H1 (cell line): ENCODE measurements at regions of chr6 and their contacts with region 1.

Region 1: DNA sequence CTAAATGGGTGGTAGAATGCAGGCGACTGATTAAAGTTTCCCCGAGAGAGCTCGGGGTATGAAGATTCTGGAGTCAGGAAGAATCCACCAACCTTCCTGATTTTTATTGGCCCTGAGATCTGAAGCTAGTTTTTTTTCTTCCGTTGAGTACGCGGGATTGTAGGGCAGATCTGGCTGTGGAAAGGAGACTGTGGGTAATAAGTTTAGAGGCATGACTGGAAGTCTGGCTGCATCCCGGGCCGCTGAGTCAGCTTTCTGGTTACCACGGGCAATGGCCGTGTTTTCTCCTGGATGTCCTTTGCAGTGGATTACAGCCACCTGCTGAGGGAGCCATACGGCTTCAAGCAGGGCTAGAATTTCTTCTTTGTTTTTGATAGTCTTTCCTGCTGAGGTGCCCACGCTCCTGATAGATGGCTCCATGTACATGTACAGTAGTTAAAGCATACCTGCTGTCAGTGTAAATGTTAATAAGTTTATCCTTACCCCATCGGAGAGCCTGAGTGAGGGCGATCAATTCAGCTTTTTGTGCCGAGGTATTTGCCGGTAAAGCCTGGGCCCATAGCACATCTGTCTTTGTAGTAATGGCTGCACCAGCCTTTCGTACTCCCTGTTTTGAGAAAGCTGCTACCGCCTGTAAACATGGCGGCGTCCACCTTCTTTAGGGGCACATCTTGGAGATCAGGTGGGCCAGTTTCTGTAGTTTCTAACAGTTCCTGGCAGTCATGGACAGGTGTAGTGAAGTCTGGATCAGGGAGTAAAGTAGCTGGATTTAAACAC is 154.0 kb downstream of the TRIM27 start:
- DNase-seq: no peak
- H3K4me3 ChIP-seq: peak overlapping the region in 2 of 4 experiments; percentile 7 to 40; a peak in 5 of 8 replicates
- H3K27ac ChIP-seq: no peak overlapping the region
- H3K4me1 ChIP-seq: peaks cover 13 to 51% (median 39%) of the 10 kb centered on the region in 4 experiments
- H3K27me3 ChIP-seq: peaks cover 87 to 100% (median 99%) of the 10 kb centered on the region in 4 experiments
- CTCF ChIP-seq: no peak
- EP300 ChIP-seq: no peak
- POLR2A ChIP-seq: no peak
- RAD21 ChIP-seq: peak; percentile 18 to 25; a peak in 1 of 4 replicates

Region 2: DNA sequence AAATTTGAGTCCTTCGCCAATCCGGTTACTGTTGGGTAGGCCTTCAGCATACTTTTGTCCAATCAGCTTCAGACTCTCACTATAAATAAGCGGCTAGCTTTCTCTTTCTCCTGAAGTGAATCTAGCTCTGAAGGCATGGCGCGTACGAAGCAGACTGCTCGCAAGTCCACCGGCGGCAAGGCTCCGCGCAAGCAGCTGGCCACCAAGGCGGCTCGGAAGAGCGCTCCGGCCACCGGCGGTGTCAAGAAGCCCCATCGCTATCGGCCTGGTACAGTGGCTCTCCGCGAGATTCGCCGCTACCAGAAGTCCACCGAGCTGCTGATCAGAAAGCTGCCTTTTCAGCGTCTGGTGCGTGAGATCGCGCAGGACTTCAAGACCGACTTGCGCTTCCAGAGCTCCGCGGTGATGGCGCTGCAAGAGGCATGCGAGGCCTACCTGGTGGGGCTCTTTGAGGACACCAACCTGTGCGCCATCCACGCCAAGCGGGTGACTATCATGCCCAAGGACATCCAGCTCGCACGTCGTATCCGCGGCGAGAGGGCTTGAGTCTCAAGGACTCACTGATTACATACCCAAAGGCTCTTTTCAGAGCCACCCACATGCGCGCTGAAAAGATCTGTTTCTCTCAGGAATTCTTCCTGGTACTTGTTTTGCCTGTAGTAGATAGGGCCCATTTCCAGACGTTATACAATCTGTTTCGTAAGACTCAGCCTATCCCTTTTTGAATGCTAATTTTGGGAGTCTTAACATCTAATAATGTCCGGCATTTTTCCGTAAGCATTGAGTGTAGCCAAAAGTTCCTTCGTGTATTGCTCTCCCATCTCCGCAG is 959.7 kb before region 1 on chr6:
- CTCF ChIA-PET with region 1: no interaction called
- POLR2A ChIA-PET with region 1: no interaction called
- DNase-seq: peak in 1 of 2 experiments; percentile 78
- H3K4me3 ChIP-seq: peak overlapping the region; percentile 78 to 96 (median 89)
- H3K27ac ChIP-seq: peak overlapping the region; percentile 84
- H3K4me1 ChIP-seq: peaks cover 0 to 6% (median 3%) of the 10 kb centered on the region in 4 experiments; a peak in 4 of 7 replicates
- H3K27me3 ChIP-seq: no peaks in the 10 kb centered on the region
- CTCF ChIP-seq: peak in 1 of 3 experiments; percentile 6; a peak in 1 of 4 replicates
- EP300 ChIP-seq: no peak
- POLR2A ChIP-seq: peak; percentile 98 to 100
- RAD21 ChIP-seq: no peak

Region 3: DNA sequence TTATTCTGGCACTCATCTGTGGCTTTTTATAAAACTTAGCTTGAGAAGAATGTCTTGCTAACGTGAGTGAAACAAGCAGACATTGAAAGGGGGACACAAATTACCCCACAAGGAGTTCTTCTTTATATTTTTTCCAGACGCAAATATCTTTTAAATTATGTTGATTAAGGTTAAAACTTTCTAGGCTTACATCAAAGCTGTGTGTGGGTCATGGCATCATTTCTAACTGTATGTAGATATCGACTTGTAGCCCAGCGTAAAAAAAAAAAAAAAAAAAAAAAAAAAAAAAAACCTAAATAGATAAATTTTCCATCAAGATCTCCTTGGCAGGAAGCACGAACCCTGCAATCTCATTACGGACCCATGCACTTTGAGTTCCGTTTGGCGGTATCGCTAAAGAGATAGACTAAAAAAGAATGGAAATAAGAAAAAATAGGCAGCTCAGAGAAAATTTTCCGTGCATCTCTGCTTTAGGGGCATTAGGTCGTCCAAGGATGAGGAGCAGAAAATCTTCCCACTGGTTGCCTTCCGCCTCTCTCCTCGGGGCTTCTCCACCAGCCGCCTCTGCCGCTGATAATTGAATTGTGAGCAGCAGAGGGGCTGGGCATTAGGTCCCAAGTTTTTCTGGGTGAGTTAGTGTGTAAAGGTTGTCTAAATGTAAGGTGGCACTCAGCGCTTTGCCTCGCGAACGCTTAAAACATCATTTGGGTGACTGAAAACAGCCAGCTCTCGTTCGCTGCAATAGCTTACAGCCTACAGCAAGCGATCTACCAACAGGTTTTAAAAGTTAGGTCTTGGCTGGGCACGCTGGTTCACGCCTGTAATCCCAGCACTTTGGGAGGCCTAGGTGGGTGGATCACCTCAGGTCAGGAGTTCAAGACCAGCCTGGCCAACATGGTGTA is 40.1 kb before region 1 on chr6:
- CTCF ChIA-PET with region 1: interaction called, 10 read pairs
- POLR2A ChIA-PET with region 1: no interaction called
- DNase-seq: no peak
- H3K4me3 ChIP-seq: peak overlapping the region; percentile 78 to 98 (median 90)
- H3K27ac ChIP-seq: no peak overlapping the region
- H3K4me1 ChIP-seq: no peaks in the 10 kb centered on the region; a peak in 1 of 7 replicates
- H3K27me3 ChIP-seq: peaks cover 0 to 7% (median 4%) of the 10 kb centered on the region in 4 experiments; a peak in 5 of 7 replicates
- CTCF ChIP-seq: no peak
- EP300 ChIP-seq: no peak
- POLR2A ChIP-seq: no peak
- RAD21 ChIP-seq: no peak

Region 4: GRCh38 chr6:28758046-28758817 is 11.6 kb before region 1 on chr6:
- CTCF ChIA-PET with region 1: interaction called, 24 read pairs
- POLR2A ChIA-PET with region 1: interaction called, 10 read pairs
- DNase-seq: peak; percentile 77 to 93
- H3K4me3 ChIP-seq: peak overlapping the region; percentile 77 to 90 (median 84)
- H3K27ac ChIP-seq: no peak overlapping the region
- H3K4me1 ChIP-seq: no peaks in the 10 kb centered on the region
- H3K27me3 ChIP-seq: peaks cover 1 to 11% (median 8%) of the 10 kb centered on the region in 4 experiments
- CTCF ChIP-seq: no peak
- EP300 ChIP-seq: no peak
- POLR2A ChIP-seq: peak in 1 of 2 experiments; percentile 37; a peak in 1 of 3 replicates
- RAD21 ChIP-seq: no peak; a peak in 1 of 4 replicates

Region 5: GRCh38 chr6:28782113-28782673 is 12.4 kb after region 1 on chr6:
- CTCF ChIA-PET with region 1: interaction called, 18 read pairs
- POLR2A ChIA-PET with region 1: interaction called, 9 read pairs
- DNase-seq: no peak
- H3K4me3 ChIP-seq: no peak overlapping the region; a peak in 2 of 8 replicates
- H3K27ac ChIP-seq: no peak overlapping the region
- H3K4me1 ChIP-seq: peaks cover 6 to 12% (median 8%) of the 10 kb centered on the region in 4 experiments
- H3K27me3 ChIP-seq: peaks cover 72 to 100% (median 89%) of the 10 kb centered on the region in 4 experiments
- CTCF ChIP-seq: no peak
- EP300 ChIP-seq: no peak
- POLR2A ChIP-seq: no peak
- RAD21 ChIP-seq: no peak

Region 6: DNA sequence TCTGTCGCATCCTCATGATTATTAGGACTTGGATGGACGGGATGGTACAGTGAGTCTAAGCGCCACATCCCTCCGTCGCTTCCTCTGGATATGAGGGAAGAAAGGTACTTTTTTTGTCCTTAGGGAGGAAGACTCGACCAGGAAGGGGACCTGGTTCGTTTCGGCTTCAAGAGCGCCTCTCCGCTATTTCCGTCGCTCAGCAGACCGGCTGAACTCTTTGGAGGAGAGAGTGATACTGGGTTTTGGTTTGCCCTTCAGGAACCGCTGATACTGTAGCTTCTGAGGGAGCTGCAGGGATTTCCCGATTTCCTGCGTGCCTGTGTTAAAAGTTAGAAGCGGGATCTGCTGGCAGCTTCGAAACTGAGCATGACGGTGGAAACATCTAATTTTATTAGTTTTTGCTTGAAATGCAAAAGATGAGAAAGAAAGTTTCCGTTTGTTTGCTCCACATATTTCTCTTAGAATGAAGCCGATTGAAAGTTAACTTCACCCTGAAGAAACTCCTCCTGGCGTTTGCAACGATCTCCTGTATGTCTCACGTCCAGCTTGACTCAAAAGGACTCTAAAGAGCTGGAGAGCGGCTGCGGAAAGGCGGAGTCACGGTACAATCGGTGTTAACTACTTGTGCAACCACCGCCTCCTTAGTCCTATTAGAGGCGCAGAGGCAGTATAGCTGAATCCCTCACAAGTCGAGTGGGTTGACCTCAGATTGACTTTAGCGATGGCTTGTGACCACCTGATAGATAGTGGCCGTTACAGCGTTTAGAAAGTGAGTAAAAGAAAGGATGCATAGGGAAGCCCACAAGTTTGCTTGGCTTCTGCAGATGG is 24.6 kb after region 1 on chr6:
- CTCF ChIA-PET with region 1: interaction called, 10 read pairs
- POLR2A ChIA-PET with region 1: no interaction called
- DNase-seq: no peak
- H3K4me3 ChIP-seq: peak overlapping the region; percentile 55 to 79 (median 68)
- H3K27ac ChIP-seq: no peak overlapping the region
- H3K4me1 ChIP-seq: peaks cover 0 to 4% (median 0%) of the 10 kb centered on the region in 4 experiments; a peak in 3 of 7 replicates
- H3K27me3 ChIP-seq: peaks cover 8 to 32% (median 29%) of the 10 kb centered on the region in 4 experiments
- CTCF ChIP-seq: no peak
- EP300 ChIP-seq: no peak
- POLR2A ChIP-seq: no peak
- RAD21 ChIP-seq: no peak

Region 7: DNA sequence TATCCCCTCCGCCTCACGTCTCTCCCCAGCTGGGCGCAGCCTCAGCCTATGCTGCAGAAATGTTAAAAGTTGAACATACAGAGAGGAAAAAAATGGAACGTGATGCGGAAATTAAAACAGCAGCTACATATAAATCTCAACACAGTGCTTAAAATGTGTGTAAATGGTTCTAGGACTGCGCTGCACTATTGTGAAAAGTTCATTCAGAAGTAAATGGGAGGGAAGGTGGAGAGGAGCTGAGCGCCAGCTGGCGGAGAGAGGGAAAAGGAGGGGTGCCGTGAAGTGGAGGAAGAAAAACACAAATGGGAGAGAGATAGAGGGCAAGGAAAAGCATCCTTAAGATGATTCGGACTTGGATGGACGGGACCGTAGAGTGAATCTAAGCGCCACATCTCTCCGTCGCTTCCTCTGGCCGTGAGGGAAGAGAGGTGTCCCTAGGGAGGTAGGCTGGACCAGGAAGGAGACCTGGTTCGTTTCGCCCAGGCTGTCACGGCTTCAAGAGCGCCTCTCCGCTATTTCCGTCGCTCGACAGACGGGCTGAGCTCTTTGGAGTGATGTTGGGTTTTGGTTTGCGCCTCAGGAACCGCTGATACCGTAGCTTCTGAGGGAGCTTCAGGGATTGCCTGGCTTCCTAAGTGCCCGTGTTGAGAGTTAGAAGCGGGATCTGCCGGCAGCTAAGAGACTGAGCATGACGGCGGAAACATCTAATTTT is 40.3 kb after region 1 on chr6:
- CTCF ChIA-PET with region 1: interaction called, 26 read pairs
- POLR2A ChIA-PET with region 1: interaction called, 4 read pairs
- DNase-seq: no peak
- H3K4me3 ChIP-seq: peak overlapping the region; percentile 30 to 67 (median 52); a peak in 7 of 8 replicates
- H3K27ac ChIP-seq: no peak overlapping the region
- H3K4me1 ChIP-seq: peaks cover 3 to 17% (median 6%) of the 10 kb centered on the region in 4 experiments; a peak in 6 of 7 replicates
- H3K27me3 ChIP-seq: peaks cover 43 to 69% (median 66%) of the 10 kb centered on the region in 4 experiments
- CTCF ChIP-seq: peak in 2 of 3 experiments; percentile 27 to 31; a peak in 2 of 4 replicates
- EP300 ChIP-seq: no peak
- POLR2A ChIP-seq: no peak
- RAD21 ChIP-seq: peak in 1 of 2 experiments; percentile 15; a peak in 1 of 4 replicates